PC-9 (cell line): ENCODE measurements at regions of chr5 and their contacts with region 1.

Region 1: DNA sequence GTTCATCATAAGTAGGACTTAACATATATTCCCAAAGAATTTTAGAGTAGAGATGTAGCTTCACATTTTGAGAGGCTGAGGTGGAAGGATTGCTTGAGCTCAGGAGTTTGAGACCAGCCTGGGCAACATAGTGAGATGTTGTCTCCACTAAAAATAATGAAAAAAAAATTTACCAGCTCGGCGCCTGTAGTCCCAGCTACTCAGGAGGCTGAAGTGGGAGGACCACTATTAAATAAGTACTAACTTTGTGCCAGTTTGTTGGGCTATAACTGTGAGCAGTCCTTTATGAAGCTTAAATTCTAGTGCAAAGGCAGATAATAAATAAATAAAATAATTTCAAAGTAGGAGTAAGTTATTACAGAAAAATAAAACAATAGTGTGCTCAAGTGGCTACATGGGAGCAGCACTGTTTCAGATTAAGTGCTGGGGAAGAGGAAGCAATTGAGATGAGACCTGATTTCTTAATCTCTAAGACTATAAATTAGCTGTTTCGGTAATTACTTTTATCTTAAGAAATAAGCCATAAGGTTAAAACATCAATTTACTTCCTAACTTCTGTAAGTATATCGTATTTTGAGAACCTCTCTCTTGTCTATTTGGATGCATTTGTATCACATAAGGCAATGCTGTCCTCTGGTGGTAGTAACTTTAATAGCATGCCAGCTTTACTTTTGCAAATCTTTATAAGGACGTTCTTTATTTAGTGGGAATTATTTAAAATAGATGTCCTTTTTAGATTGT is 98.9 kb downstream of the CSNK1G3 start:
- DNase-seq: peak; percentile 12 to 36
- H3K4me3 ChIP-seq: no peak overlapping the region
- H3K27ac ChIP-seq: peak overlapping the region; percentile 8
- H3K4me1 ChIP-seq: no peaks in the 10 kb centered on the region
- H3K27me3 ChIP-seq: no peaks in the 10 kb centered on the region
- CTCF ChIP-seq: peak; percentile 97

Region 2: GRCh38 chr5:122500245-122501075 is 1110.4 kb before region 1 on chr5:
- CTCF ChIA-PET with region 1: no interaction called
- POLR2A ChIA-PET with region 1: no interaction called
- intact Hi-C with region 1: loop called (anchors 2 kb)
- DNase-seq: peak in 1 of 2 experiments; percentile 26
- H3K4me3 ChIP-seq: no peak overlapping the region
- H3K27ac ChIP-seq: no peak overlapping the region
- H3K4me1 ChIP-seq: no peaks in the 10 kb centered on the region
- H3K27me3 ChIP-seq: no peaks in the 10 kb centered on the region
- CTCF ChIP-seq: peak; percentile 58

Region 3: DNA sequence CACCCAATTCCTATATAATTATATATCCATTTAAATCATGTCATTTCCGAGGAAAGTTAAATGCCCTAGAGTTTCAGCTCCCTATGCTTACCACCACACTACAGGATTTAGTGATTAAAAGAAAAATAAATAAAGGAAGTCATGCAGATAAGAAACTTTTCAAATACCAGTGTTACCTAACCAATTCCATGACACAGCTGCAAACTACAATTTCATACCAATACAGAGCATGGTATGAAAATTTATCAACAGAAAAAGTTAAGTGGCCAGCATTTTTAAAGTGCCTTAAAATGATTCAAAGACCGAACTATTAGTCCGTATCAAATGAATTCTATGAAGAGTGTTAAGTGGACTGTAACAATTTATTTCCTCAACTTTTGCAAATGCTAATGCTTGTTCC is 223.5 kb before region 1 on chr5:
- CTCF ChIA-PET with region 1: no interaction called
- POLR2A ChIA-PET with region 1: no interaction called
- intact Hi-C with region 1: loop called (anchors 10 kb)
- DNase-seq: no peak
- H3K4me3 ChIP-seq: no peak overlapping the region
- H3K27ac ChIP-seq: no peak overlapping the region
- H3K4me1 ChIP-seq: no peaks in the 10 kb centered on the region
- H3K27me3 ChIP-seq: no peaks in the 10 kb centered on the region
- CTCF ChIP-seq: no peak